HCT116 (cell line): ENCODE measurements at regions of chr1 and their contacts with region 1.

Region 1: DNA sequence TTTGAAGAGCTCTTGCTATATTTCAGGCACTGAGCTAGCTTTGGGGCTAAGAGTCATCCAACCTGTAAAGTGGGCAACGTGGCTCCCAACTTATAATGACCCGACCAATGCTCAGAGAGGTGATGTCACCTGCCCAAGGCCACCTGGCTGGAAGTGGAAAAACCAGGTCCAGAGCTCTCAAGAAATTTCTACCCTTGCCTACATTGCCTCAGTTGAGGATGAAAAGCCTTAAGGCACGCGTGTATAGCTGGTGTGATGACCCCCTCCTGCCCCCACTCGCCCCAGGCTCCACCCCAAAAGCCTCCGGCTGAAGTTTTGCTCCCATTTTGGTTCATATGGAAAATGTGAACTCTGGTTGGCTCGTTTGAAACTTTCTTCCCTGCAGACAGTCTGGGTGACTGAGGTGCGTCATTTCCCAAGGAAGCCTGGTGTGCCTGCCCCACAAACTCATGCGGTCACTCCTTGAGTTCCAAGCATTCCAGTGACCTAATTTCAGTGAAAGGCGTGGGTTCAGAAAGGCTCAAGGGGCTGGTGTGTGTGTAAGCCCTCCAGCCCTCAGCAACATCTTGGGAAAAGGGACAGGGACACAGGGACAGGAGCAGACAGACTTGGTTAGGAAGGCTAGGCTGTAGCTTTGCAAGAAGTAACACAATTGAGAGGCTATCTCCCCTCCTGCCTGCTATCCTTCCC is 20.5 kb downstream of the HTR1D start:
- DNase-seq: peak; percentile 91
- ATAC-seq: peak; percentile 92
- H3K4me3 ChIP-seq: peak overlapping the region in 1 of 2 experiments; percentile 28; a peak in 2 of 4 replicates
- H3K27ac ChIP-seq: peak overlapping the region; percentile 70
- H3K4me1 ChIP-seq: peaks cover 26 to 54% of the 10 kb centered on the region in 2 experiments
- H3K27me3 ChIP-seq: no peaks in the 10 kb centered on the region
- CTCF ChIP-seq: no peak
- POLR2A ChIP-seq: no peak
- RAD21 ChIP-seq: no peak

Region 2: GRCh38 chr1:23184212-23184934 is 12.4 kb before region 1 on chr1:
- CTCF ChIA-PET with region 1: interaction called, 28 read pairs
- POLR2A ChIA-PET with region 1: no interaction called
- RAD21 ChIA-PET with region 1: interaction called in 1 of 2 experiments, 3 read pairs
- intact Hi-C with region 1: no loop called
- DNase-seq: no peak
- ATAC-seq: peak; percentile 59
- H3K4me3 ChIP-seq: no peak overlapping the region
- H3K27ac ChIP-seq: no peak overlapping the region
- H3K4me1 ChIP-seq: peaks cover 17 to 26% of the 10 kb centered on the region in 2 experiments
- H3K27me3 ChIP-seq: no peaks in the 10 kb centered on the region
- CTCF ChIP-seq: peak; percentile 59 to 95 (median 76)
- POLR2A ChIP-seq: no peak
- RAD21 ChIP-seq: peak; percentile 96

Region 3: GRCh38 chr1:23422241-23423030 is 225.7 kb after region 1 on chr1:
- CTCF ChIA-PET with region 1: no interaction called
- POLR2A ChIA-PET with region 1: no interaction called
- RAD21 ChIA-PET with region 1: no interaction called
- intact Hi-C with region 1: no loop called
- DNase-seq: no peak
- ATAC-seq: no peak
- H3K4me3 ChIP-seq: no peak overlapping the region
- H3K27ac ChIP-seq: no peak overlapping the region
- H3K4me1 ChIP-seq: peaks cover 0 to 13% of the 10 kb centered on the region in 2 experiments; a peak in 1 of 4 replicates
- H3K27me3 ChIP-seq: no peaks in the 10 kb centered on the region
- CTCF ChIP-seq: no peak
- POLR2A ChIP-seq: no peak
- RAD21 ChIP-seq: no peak

Region 4: GRCh38 chr1:23777979-23778814 is 581.4 kb after region 1 on chr1 and contains the start of gene PITHD1:
- CTCF ChIA-PET with region 1: no interaction called
- POLR2A ChIA-PET with region 1: no interaction called
- RAD21 ChIA-PET with region 1: no interaction called
- intact Hi-C with region 1: no loop called
- DNase-seq: peak; percentile 76
- ATAC-seq: peak; percentile 84
- H3K4me3 ChIP-seq: peak within 1 kb of the TSS; percentile 98 to 99
- H3K27ac ChIP-seq: peak within 1 kb of the TSS; percentile 75
- H3K4me1 ChIP-seq: peaks cover 18 to 21% of the 10 kb centered on the region in 2 experiments
- H3K27me3 ChIP-seq: no peaks in the 10 kb centered on the region
- CTCF ChIP-seq: no peak
- POLR2A ChIP-seq: peak; percentile 64
- RAD21 ChIP-seq: no peak
- total RNA-seq, gene PITHD1: 57.2 TPM